ENCODE measurements at regions of chr19 and their contacts with region 1.

Region 1: DNA sequence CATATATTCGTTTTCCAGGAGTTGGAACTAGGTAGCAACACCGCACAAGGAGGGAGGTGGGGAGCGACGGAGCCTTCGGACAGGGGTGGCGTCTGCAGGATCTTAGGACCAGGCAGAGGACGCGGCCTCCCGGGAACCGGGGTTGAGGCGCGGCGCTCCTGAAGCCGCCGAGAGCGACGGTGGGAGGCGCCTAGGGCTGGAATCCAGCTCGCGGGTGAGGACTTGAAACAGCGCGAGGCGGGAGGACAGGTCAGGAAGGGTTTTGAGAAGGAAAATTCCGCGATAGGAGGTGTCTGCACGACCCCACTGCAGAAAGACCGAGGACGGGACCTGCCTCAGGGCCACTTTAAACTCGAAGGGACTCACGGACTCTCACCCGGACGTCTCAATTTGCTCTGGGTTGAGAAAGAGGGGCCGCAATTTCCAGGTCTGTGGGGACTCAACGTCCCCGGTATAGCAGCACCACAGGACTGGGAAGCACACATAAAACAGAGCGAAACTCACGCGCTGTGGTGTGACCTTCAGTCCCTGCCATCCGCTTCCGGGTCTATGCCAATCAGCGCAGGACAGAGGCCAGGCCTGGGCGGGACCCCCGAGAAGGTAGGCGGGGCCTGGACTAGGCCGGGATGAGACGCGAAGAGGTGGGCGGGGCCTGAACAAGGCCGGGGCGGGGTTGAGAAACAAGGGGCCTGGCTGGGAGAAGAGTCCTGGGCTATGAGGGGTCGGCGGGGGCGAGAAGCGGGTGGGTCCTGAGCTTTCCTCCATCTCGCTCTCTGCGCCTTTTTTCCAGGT is at the start of gene ZNF320:
- DNase-seq: peak; percentile 90 to 97 (median 97)
- H3K4me3 ChIP-seq: peak within 1 kb of the TSS; percentile 67 to 97 (median 86)
- H3K27ac ChIP-seq: peak within 1 kb of the TSS; percentile 13 to 91 (median 79)
- H3K27me3 ChIP-seq: no peaks in the 10 kb centered on the region
- CTCF ChIP-seq: peak in 6 of 56 donors; percentile 8 to 37 (median 17)
- total RNA-seq, gene ZNF320: 13.8 to 49.1 (median 23.7) TPM

Region 2: GRCh38 chr19:52942386-52943133 is 45.2 kb after region 1 on chr19:
- intact Hi-C with region 1: loop called in 1 of 2 experiments (anchors 5 kb)
- DNase-seq: peak; percentile 67 to 88 (median 81)
- H3K4me3 ChIP-seq: peak overlapping the region; percentile 39 to 82 (median 68)
- H3K27ac ChIP-seq: peak overlapping the region in 42 of 59 donors; percentile 7 to 87 (median 62)
- H3K27me3 ChIP-seq: peaks cover 0 to 3% (median 0%) of the 10 kb centered on the region in 45 donors
- CTCF ChIP-seq: peak in 10 of 56 donors; percentile 8 to 44 (median 18)

Region 3: DNA sequence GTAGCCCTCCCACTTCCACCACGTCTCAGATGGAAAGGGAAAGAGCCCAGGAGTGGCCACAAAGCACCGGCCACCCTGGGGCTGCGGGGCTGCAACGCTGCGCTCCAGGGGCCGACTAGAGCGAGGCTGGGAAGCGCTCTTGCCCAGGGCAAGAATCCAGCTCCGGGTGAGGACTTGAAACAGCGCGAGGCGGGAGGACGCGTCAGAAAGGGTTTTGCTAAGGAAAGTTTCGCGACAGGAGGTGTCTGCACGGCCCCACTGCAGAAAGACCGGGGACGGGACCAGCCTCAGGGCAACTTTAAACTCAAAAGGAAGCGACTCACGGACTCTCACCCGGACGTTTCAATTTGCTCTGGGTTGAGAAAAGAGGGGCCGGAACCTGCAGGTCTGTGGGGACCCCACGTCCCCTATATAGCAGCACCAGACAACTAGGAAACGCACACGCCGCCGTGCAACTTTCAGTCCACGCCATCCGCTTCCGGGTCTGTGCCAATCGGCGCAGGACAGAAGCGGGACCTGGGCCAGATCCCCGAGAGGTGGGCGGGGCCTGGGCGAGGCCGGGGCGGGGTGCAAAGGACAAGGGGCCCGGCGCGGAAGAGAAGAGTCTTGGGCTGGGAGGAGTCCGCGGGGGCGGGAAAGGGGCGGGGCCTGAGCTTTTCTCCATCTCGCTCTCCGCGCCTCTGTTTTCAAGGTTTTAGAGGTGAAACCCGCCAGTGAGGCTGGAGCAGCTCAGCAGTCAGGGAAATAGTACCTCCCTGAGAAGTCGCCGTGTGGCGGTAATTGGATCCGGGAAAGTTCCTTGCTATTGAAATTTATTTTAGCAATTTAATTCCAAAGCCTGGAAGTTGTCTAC is 65.3 kb after region 1 on chr19 and contains the start of gene ZNF816:
- intact Hi-C with region 1: loop called in 1 of 2 experiments (anchors 5 kb)
- DNase-seq: peak; percentile 83 to 93 (median 88)
- H3K4me3 ChIP-seq: peak within 1 kb of the TSS; percentile 40 to 84 (median 71)
- H3K27ac ChIP-seq: peak within 1 kb of the TSS in 57 of 59 donors; percentile 10 to 89 (median 71)
- H3K27me3 ChIP-seq: no peaks in the 10 kb centered on the region
- CTCF ChIP-seq: peak in 4 of 56 donors; percentile 7 to 40 (median 30)
- total RNA-seq, gene ZNF816: 2.2 to 11.9 (median 5.0) TPM

Region 4: DNA sequence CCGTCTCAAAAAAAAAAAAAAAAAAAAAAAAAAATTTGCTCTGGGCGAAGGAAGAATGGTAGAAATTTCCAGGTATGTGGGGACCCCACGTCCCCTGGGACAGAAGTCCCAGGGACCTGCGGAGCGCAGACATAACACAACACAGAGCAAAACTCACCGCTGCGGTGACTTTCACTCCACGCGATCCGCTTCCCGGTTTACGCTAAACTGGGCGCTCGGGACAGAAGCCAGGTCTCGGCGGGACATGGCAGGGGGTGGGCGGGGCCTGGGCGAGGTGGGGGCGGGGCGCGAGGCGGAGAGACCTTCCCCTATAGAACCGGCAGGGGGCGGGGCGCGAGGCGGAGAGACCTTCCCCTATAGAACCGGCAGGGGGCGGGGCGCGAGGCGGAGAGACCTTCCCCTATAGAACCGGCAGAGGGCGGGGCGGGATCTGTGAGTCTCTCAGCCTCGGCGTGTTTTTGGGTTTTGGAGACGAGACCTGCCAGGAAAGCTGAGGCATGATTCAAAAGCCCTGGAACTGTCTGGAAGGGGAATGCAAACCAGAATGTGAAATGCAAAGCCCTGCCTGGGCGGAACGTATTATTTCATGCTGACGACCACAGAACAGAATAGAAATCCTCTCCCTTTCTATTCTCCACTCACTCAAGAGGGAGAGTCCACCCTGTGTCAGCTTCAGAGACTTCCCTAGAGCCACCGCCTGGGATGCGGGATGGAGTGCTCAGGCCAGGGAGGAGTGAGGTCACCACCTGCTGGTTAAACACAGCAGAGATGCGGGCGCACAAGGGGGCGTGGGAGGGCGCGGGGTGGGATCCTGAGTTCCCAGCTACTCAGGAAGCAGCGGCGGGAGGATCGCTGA is 96.2 kb after region 1 on chr19:
- intact Hi-C with region 1: loop called in 1 of 2 experiments (anchors 5 kb)
- DNase-seq: peak; percentile 47 to 83 (median 75)
- H3K4me3 ChIP-seq: peak overlapping the region; percentile 34 to 77 (median 56)
- H3K27ac ChIP-seq: peak overlapping the region in 47 of 59 donors; percentile 16 to 91 (median 59)
- H3K27me3 ChIP-seq: no peaks in the 10 kb centered on the region
- CTCF ChIP-seq: peak; percentile 14 to 84 (median 69)